Right ventricle myocardium inferior (tissue), 1 donor: ENCODE measurements at regions of chrX and their contacts with region 1.

Region 1: DNA sequence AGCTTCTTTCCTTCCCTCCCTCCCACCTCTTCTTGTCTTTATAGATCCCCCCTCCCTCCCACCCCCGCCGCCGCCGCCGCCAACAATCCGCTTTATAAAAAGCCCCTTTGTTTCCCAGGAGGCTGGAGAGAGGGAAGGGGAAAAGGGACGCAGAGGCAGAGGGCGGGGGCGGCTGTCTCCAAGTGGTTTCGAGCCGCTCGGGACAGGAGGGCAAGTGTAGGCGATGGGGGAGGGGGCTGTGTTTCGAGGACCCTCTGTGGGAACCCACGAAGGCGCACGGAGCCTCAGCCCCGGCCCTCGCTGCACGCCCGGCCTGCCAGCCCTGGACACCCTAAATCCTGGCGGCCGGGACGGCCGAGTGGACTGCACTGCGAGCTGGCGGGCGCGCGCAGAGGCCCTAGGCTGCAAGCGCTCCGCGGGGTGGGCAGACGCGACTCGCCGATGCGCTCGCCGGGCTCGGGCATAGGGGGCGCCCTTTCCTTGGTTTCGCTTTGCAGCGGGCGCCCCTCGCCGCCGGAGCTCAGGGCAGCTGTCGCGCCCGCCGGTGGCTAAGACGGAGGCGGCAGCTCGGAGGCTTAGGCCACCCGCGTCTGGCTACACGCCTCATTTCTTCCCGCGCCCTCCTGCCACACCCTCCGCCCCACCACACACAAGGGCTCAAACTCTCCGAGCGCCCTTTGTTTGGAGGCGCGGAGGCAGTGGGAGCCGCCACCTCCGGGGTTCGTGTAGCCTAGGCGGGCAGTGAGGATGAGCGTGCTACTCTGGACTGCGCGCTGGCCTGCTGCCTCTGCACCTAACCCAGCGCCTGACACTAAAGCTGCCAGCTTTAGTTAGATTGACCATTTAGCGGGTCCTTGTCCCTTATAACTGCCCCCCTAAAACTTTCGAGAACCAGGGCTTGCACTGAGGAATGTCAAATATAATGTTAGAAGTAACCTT is 2.2 kb downstream of the MAMLD1 start:
- DNase-seq: peak; percentile 82
- ATAC-seq: peak; percentile 87

Region 2: DNA sequence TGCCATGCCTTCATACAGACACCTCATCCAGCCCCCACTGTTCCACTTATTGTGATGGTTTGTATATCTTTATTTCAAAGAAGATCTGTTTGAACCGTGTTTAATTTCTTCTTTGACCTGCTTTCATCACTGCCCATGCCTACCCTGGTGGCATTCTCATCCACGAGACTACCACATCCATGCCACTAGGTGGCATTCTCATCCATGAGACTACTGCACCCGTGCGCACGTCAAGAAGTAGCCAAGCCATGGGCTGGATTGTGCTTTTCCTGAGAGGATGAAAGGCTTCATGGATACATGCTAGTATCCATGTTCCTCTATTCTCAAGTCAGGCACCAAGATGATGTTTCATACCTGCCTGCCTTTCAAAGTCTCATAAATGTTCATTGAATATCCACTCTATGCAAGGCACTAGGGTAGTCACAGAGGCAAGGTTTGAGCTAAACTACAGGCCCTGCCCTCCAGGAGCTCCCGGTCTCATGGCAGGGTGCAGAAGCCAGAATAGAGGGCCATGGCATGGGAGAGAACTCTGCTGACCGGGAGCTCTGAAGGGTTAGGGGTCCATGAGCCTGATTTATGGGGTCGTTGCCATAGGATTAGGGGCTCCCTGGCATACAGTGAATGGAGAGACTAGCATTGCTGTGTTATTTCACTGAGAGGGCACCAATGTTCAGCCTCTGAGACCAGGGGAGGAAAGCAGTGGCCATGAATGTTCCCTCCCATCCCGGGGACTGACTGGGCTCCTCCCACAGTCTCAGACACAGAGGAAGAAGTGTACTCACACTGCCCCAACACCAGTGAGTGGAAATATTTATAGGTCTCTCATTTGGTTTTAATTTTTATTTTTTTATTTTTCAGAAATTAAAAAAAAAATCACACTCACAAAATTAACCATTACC is 402.2 kb before region 1 on chrX:
- intact Hi-C with region 1: loop called (anchors 5 kb)
- DNase-seq: no peak
- ATAC-seq: peak; percentile 77

Region 3: GRCh38 chrX:150182161-150182560 is 183.2 kb before region 1 on chrX:
- intact Hi-C with region 1: no loop called
- DNase-seq: no peak
- ATAC-seq: no peak

Region 4: GRCh38 chrX:150212672-150213480 is 152.4 kb before region 1 on chrX:
- intact Hi-C with region 1: loop called (anchors 5 kb)
- DNase-seq: no peak
- ATAC-seq: peak; percentile 96

Region 5: GRCh38 chrX:150262456-150262855 is 102.9 kb before region 1 on chrX:
- intact Hi-C with region 1: no loop called
- DNase-seq: no peak
- ATAC-seq: no peak

Region 6: DNA sequence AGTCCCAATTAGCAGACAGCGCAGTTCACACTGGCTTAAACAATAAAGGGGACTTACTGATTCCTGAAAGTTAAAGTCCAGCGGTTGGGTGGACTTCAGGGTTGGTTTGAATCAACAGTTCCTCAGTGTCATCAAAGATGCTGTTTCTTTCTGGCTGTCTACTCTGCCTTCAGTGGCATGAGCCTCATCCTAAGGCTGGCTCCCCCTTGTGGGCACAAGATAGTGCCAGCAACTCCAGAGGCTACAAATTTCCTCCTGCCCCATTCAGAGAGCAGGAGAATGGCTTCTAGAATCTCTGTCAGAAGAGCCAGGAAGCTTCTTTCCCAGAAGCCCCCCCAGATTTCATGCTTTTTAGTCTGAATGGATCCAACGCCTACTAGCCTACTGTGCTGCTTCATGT is 120.7 kb after region 1 on chrX:
- intact Hi-C with region 1: loop called (anchors 10 kb)
- DNase-seq: no peak
- ATAC-seq: no peak

Region 7: DNA sequence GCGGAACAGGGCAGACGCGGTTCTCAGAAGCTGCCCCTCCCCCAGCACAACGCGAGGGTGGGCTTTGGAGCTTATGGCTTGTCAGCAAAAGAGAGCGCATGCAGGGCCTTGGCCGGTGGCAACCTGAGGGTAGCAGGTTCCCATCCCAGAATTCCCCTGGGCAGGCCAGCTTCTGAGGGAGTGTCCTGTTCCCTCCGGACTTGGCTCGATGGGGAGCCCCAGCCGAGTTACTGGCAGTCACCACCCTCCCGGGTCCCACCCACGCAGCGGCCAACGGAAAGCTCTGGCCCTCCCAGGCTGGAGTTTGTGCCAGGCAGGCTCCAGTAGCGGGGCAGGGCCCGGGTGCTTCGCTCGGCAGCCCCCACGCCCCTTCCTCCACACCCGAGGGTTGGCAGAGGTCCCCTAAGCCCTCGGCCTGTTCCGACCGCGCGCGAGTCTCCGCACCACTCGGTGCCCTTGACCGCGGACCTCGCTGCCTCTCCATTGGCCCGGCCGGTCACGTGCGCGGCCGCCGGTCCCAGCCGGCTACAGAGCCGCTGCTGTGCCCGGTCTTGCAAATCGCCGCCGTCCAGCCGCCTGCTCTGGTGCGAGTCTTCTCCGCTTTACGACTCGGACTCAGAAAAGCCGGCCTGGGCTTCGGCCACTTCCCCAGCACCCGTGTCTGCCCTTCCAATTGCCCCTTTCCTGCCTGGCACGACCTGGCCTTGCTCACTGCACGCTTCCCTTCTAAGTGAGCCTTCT is 182.2 kb after region 1 on chrX:
- intact Hi-C with region 1: loop called (anchors 10 kb)
- DNase-seq: peak; percentile 89
- ATAC-seq: peak; percentile 94

Region 8: GRCh38 chrX:150898343-150899190 is 533.2 kb after region 1 on chrX and contains the start of gene CD99L2:
- intact Hi-C with region 1: loop called (anchors 10 kb)
- DNase-seq: peak; percentile 95
- ATAC-seq: peak; percentile 99
- total RNA-seq, gene CD99L2: 81.4 TPM